Left cardiac atrium (tissue), 4 donors: ENCODE measurements at regions of chr9 and their contacts with region 1.

Region 1: GRCh38 chr9:33721674-33722358 is 73.5 kb upstream of the PRSS3 start:
- DNase-seq: peak; percentile 88
- ATAC-seq: peak; percentile 88

Region 2: GRCh38 chr9:33623658-33624586 is 97.9 kb before region 1 on chr9:
- intact Hi-C with region 1: loop called (anchors 1 to 5 kb)
- DNase-seq: peak; percentile 53
- ATAC-seq: peak; percentile 83 to 84

Region 3: GRCh38 chr9:33628865-33629410 is 92.9 kb before region 1 on chr9:
- intact Hi-C with region 1: loop called (anchors 1 to 5 kb)
- DNase-seq: no peak
- ATAC-seq: no peak

Region 4: DNA sequence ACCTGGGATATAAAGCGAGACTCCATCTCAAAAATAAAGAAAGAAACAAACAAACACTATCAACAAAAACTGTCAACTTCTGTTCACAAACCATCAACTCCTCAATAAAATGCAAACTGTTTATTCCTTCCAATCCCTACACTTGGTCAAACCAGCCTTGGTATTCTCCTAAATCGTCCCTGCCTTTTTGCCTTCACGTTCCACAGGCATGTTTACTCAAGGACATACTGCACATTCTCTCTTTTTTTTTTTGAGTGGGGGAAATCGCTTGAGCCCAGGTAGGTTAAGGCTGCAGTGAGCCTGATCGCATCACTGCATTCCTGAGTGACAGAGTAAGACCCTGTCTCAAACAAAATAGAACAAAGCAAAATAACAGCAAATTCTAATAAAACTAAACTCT is 313.8 kb after region 1 on chr9:
- intact Hi-C with region 1: no loop called
- DNase-seq: no peak
- ATAC-seq: no peak